ENCODE measurements at regions of chr6 and their contacts with region 1.

Region 1: GRCh38 chr6:139369568-139370282 is 4.7 kb downstream of the CITED2 start:
- DNase-seq: no peak
- ATAC-seq: peak in 1 of 4 donors; percentile 15
- H3K4me3 ChIP-seq: peak overlapping the region; percentile 80
- H3K27ac ChIP-seq: peak overlapping the region; percentile 98
- H3K4me1 ChIP-seq: peaks cover 30% of the 10 kb centered on the region
- H3K27me3 ChIP-seq: no peaks in the 10 kb centered on the region
- CTCF ChIP-seq: peak; percentile 73

Region 2: GRCh38 chr6:138987640-138988468 is 381.9 kb before region 1 on chr6 and contains the start of gene REPS1:
- intact Hi-C with region 1: loop called in 1 of 2 experiments (anchors 5 kb)
- DNase-seq: peak; percentile 91 to 95
- ATAC-seq: peak; percentile 99
- H3K4me3 ChIP-seq: peak within 1 kb of the TSS; percentile 81
- H3K27ac ChIP-seq: peak within 1 kb of the TSS; percentile 93
- H3K4me1 ChIP-seq: peaks cover 7% of the 10 kb centered on the region
- H3K27me3 ChIP-seq: no peaks in the 10 kb centered on the region
- CTCF ChIP-seq: peak; percentile 99
- total RNA-seq, gene REPS1: 16.3 to 23.9 (median 21.5) TPM

Region 3: DNA sequence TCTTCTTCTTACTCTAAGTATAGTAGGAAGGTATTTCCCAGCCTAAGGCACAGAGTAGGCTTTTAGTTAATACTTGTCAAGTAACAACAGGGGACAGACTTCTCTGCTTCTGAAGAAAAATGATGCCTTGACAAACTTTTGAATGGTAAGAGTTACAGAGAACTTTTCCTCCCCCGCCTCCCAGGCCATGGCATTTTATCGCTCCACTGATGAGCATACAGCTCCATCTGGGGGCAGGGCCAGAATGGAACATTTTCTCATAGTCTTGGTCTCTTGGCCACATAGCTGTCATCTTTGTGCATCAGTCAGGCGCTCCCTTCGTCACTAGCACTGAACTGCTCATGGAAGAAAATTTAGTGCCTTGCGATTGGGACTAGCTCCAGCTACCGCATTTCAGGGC is 1071.5 kb after region 1 on chr6:
- intact Hi-C with region 1: loop called (anchors 1 to 5 kb)
- DNase-seq: peak; percentile 25 to 68
- ATAC-seq: peak; percentile 83 to 95 (median 84)
- H3K4me3 ChIP-seq: no peak overlapping the region
- H3K27ac ChIP-seq: peak overlapping the region; percentile 17
- H3K4me1 ChIP-seq: peaks cover 31% of the 10 kb centered on the region
- H3K27me3 ChIP-seq: no peaks in the 10 kb centered on the region
- CTCF ChIP-seq: peak; percentile 59